HCT116 (cell line): ENCODE measurements at regions of chr5 and their contacts with region 1.

Region 1: DNA sequence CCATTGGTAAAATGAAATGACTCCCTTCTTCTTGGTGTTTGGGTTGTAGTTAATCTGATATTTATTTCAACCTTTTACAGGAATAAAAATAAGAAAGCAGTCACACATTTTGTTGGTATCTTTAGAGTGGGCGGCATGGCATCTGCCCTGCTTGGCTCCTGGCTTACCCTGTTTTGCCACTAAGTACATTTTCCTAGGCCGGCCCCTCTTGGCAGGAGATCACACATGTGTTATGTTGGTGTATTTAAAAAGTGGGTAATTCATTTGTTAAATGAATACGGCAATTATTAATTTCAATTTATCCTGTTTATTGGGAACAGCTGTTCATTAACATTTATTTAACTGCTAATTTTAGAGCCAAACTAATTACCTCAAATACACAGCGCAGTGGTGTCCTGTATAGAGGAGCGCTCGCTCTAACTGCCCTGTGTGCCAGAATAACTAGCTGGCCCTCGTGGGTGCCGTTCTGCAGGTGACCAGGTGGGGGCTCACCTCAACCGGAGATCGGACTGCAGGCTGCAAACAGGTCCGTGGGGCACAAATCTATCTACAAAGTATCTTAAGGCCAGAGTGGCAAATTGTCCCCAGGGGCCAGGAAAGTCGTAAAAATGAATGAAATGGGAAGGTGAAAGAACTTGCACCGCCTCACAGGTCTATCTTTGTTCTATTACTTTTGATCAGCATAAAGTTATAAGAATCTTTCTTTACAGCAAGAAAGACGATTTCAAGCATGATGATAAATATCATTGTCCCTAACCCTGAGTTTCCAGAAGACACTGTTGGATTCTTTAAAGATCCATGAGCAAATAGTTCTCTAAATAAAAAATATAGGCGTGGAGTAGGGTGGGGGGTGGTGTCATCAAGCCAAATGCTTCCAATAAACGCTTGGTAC is 26.2 kb upstream of the GPR151 start:
- DNase-seq: peak; percentile 49
- ATAC-seq: peak; percentile 99
- H3K4me3 ChIP-seq: no peak overlapping the region
- H3K27ac ChIP-seq: no peak overlapping the region
- H3K4me1 ChIP-seq: no peaks in the 10 kb centered on the region
- H3K27me3 ChIP-seq: no peaks in the 10 kb centered on the region
- CTCF ChIP-seq: peak; percentile 89 to 97 (median 90)
- POLR2A ChIP-seq: no peak
- RAD21 ChIP-seq: peak; percentile 96

Region 2: DNA sequence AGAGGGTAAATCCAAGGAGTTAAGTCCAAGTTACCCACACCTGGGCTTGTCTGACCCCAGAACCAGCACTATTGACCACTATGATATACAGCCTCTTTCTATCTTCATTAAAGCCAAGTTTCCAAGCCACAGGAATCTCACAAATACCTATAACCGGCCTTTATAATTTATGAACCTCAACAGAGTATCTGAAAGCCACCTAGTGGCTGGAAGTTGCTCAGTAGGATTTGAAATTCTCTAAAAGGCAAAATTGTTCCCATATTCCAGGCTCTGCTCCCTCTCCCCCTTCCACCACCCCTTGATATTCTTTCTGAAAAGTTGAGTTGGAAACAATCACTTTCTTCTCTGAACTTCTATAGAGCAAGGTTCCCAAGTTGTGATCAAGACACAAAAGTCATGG is 80.2 kb after region 1 on chr5:
- CTCF ChIA-PET with region 1: interaction called, 3 read pairs
- POLR2A ChIA-PET with region 1: no interaction called
- RAD21 ChIA-PET with region 1: no interaction called
- intact Hi-C with region 1: loop called (anchors 1 kb)
- DNase-seq: no peak
- ATAC-seq: peak; percentile 66
- H3K4me3 ChIP-seq: no peak overlapping the region
- H3K27ac ChIP-seq: no peak overlapping the region
- H3K4me1 ChIP-seq: no peaks in the 10 kb centered on the region
- H3K27me3 ChIP-seq: no peaks in the 10 kb centered on the region; the same call in 1 of the 2 replicates
- CTCF ChIP-seq: peak; percentile 48 to 68 (median 64); a peak in 5 of 6 replicates
- POLR2A ChIP-seq: no peak
- RAD21 ChIP-seq: peak; percentile 30; the same call in 1 of the 2 replicates

Region 3: DNA sequence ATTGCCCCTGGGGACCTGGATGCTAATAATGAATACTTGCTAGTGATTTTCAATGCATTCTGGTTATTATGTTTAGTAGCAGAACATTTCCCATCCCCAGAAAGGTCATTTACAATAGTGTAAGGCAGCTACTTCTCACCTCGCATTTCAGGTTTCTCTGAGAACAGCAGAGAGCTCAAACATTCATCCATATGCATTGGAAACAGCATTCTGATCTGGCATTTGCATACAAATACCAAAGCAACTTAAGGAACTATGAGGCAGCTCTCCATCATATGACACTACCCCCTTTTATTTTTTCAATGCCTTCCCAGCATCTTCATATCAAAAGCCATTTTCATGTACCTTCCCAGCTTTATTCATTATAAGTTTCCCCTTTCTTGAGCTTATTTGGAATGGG is 330.0 kb after region 1 on chr5:
- CTCF ChIA-PET with region 1: no interaction called
- POLR2A ChIA-PET with region 1: no interaction called
- RAD21 ChIA-PET with region 1: no interaction called
- intact Hi-C with region 1: no loop called
- DNase-seq: no peak
- ATAC-seq: no peak
- H3K4me3 ChIP-seq: no peak overlapping the region
- H3K27ac ChIP-seq: no peak overlapping the region
- H3K4me1 ChIP-seq: no peaks in the 10 kb centered on the region
- H3K27me3 ChIP-seq: peaks cover 14% of the 10 kb centered on the region; the same call in 1 of the 2 replicates
- CTCF ChIP-seq: no peak
- POLR2A ChIP-seq: no peak
- RAD21 ChIP-seq: no peak

Region 4: GRCh38 chr5:146947181-146947941 is 405.2 kb after region 1 on chr5:
- CTCF ChIA-PET with region 1: interaction called, 4 read pairs
- POLR2A ChIA-PET with region 1: no interaction called
- RAD21 ChIA-PET with region 1: no interaction called
- intact Hi-C with region 1: loop called (anchors 5 kb)
- DNase-seq: peak; percentile 16
- ATAC-seq: peak; percentile 77
- H3K4me3 ChIP-seq: no peak overlapping the region
- H3K27ac ChIP-seq: no peak overlapping the region
- H3K4me1 ChIP-seq: no peaks in the 10 kb centered on the region
- H3K27me3 ChIP-seq: no peaks in the 10 kb centered on the region
- CTCF ChIP-seq: peak; percentile 27 to 65 (median 45); a peak in 4 of 6 replicates
- POLR2A ChIP-seq: no peak
- RAD21 ChIP-seq: peak; percentile 50

Region 5: GRCh38 chr5:147188200-147189108 is 646.2 kb after region 1 on chr5:
- CTCF ChIA-PET with region 1: interaction called, 42 read pairs
- POLR2A ChIA-PET with region 1: no interaction called
- RAD21 ChIA-PET with region 1: interaction called, 5 to 9 read pairs
- intact Hi-C with region 1: loop called (anchors 1 kb)
- DNase-seq: peak; percentile 42
- ATAC-seq: peak; percentile 93
- H3K4me3 ChIP-seq: no peak overlapping the region
- H3K27ac ChIP-seq: no peak overlapping the region
- H3K4me1 ChIP-seq: no peaks in the 10 kb centered on the region
- H3K27me3 ChIP-seq: peaks cover 3% of the 10 kb centered on the region; the same call in 1 of the 2 replicates
- CTCF ChIP-seq: peak; percentile 65 to 88 (median 71)
- POLR2A ChIP-seq: no peak
- RAD21 ChIP-seq: peak; percentile 84